Astrocyte of the cerebellum (primary cell): ENCODE measurements at regions of chr20 and their contacts with region 1.

Region 1: DNA sequence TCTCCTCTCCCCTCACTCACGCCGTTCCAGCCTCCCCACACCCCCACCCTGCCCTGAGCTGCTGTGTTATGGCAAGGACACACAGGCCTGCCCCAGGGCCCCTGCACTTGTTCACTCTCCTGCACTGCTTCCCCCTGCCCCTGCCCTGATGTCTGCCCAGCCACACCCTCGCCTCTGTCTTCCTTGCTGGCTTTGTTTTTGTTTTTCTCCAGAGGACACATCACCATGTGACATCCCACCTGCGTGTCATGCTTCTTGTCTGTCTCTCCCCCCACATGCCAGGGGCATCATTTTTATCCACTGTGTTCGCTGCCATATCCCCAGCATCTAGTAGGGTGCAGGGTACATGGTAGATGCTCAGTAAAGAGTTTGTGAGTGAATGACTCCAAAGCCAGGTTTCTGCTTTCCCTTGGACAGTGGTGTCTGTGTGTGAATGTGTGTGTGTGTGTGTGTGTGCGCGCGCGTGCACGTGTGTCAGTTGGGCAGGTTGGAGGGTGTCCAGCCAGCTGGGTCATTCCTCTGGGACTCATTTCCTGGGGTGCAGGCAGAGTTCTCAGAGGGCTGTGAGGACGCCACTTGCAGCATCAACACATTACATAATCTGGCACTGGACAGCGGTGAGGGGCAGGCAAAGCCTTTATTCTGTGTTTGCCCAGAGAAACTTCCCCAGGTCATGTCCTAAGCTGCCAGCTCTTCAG is 60.6 kb downstream of the STK35 start:
- DNase-seq: no peak
- H3K4me3 ChIP-seq: no peak overlapping the region
- CTCF ChIP-seq: no peak

Region 2: DNA sequence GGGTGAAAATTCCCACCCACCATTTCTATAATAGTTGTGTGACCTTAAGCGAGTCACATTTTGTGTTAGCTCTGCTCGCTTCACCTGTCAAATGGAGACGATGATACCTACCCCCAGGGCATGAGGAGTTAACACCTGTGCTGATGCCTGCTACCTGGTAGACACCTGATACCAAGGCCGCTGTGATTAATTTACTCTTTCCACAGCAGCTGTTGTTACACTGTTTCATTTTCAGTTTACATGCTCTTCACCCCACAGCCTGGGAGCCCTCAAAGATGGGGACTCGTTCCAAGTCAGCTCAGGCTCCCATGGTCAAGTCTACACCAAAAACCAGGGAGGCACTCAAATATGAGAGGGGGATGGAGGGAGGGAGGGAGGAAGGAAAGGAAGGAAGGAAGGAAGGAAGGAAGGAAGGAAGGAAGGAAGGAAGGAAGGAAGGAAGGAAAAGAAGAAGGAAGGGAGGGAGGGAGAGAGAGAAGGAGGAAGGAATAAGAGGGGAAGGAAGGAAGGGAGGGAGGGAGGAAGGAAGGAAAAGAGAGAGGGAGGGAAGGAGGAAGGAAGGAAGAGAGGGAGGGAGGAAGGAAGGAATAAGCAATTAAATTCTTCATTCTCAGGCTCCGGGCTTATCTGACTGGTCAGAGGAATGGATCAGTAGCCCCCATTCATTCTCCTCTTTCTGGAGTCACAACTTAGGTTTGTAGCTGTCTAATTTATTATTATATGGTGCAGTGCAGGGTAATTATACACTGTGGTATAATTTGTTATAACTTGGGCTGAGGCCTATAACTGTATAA is 209.3 kb before region 1 on chr20:
- in situ Hi-C with region 1: loop called (anchors 10 kb)
- DNase-seq: no peak
- H3K4me3 ChIP-seq: no peak overlapping the region
- CTCF ChIP-seq: no peak